OCI-LY7 (cell line): ENCODE measurements at regions of chr6 and their contacts with region 1.

Region 1: DNA sequence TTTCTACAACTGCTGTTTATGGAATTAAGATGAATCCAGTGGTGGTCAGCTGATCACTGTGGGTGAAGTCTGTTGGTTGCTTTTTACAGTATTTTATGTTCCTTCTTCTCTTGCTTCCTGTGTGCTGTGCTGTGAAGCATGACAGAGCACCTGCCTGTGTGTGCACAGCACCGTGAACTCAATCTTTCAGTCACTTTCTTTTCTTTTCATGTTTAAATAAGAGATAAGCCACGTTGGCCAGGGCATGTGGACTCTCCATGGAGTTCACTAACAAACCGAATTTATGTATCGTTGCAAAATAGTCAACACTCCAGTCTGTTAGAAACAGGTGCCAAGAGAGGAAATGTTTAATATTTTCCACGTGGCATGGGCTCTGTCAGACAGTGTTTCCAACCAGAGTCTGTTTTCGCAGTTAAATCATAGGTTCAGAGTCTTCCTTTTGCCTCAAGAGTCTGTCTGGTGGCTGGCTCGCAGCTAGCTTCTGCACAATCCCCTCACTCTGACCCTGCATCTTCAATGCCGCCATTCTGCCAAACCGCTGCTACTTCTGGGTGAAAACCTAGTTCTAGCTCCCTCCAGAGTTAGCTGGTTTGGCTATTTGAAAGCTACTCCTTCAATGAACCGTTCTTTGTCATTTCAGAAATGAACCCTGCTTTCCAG is 73.2 kb downstream of the QRSL1 start:
- DNase-seq: peak; percentile 99
- H3K4me3 ChIP-seq: peak overlapping the region; percentile 61
- H3K27ac ChIP-seq: peak overlapping the region; percentile 99
- H3K4me1 ChIP-seq: peaks cover 65% of the 10 kb centered on the region
- CTCF ChIP-seq: no peak

Region 2: DNA sequence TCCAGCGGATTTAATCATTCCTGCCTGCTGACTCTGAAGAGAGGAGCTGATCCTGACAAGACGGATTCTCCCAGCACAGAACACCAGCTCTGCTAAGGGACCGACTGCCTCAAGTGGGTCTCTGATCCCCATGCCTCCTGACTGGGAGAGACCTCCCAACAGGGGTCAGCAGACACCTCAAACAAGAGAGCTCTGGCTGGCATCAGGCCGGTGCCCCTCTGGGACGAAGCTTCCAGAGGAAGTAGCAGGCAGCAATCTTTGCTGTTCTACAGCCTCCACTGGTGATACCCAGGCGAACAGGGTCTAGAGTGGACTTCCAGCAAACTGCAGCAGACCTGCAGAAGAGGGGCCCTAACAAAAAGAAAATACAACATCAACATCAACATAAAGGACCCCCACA is 439.2 kb before region 1 on chr6:
- CTCF ChIA-PET with region 1: no interaction called
- POLR2A ChIA-PET with region 1: no interaction called
- intact Hi-C with region 1: no loop called
- DNase-seq: no peak
- H3K4me3 ChIP-seq: no peak overlapping the region
- H3K27ac ChIP-seq: no peak overlapping the region
- H3K4me1 ChIP-seq: no peaks in the 10 kb centered on the region
- CTCF ChIP-seq: no peak

Region 3: GRCh38 chr6:106629103-106629858 is 73.3 kb before region 1 on chr6 and contains the starts of genes QRSL1 and RTN4IP1:
- CTCF ChIA-PET with region 1: interaction called, 3 read pairs
- POLR2A ChIA-PET with region 1: interaction called, 12 read pairs
- intact Hi-C with region 1: loop called (anchors 1 kb)
- DNase-seq: peak; percentile 95
- H3K4me3 ChIP-seq: peak within 1 kb of the TSS; percentile 83
- H3K27ac ChIP-seq: peak within 1 kb of the TSS; percentile 98
- H3K4me1 ChIP-seq: peaks cover 54% of the 10 kb centered on the region
- CTCF ChIP-seq: no peak
- total RNA-seq, gene QRSL1: 63.9 and 65.7 TPM in 2 replicates
- total RNA-seq, gene RTN4IP1: 25.2 TPM in 2 replicates

Region 4: GRCh38 chr6:106648651-106649308 is 53.8 kb before region 1 on chr6:
- CTCF ChIA-PET with region 1: no interaction called
- POLR2A ChIA-PET with region 1: interaction called, 21 read pairs
- intact Hi-C with region 1: loop called (anchors 1 kb)
- DNase-seq: peak; percentile 91
- H3K4me3 ChIP-seq: peak overlapping the region; percentile 73
- H3K27ac ChIP-seq: peak overlapping the region; percentile 96
- H3K4me1 ChIP-seq: peaks cover 49% of the 10 kb centered on the region
- CTCF ChIP-seq: no peak

Region 5: DNA sequence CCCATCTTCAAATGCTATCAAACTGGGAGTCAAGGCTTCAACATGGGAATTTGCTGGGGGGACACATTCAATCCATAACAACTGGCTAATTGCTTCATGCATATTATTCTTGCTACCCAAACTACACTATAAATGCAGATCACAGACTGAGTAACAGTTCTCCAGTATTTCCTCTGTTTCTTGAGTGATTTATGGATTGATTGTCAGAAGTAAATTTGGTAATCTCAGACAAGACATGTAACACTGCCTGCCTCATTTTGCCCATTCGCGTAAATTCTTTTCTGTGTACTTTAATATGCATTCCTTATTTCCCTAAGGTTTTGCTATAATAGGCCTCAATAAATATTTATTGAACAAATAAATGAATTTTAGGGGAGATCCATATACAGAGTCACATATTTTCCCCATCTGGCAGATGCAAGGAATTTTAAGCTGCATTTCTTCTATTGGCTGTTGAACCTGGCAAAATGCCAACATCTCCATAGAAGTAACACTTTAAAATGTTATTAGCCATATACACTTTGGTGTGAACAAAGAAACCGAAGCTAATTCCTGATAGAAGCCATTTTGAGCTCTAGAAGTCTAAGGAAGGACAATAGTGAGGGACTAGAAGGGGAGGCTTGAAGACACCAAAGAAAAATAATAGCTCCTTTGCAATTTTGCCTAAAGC is 25.0 kb after region 1 on chr6:
- CTCF ChIA-PET with region 1: interaction called, 3 read pairs
- POLR2A ChIA-PET with region 1: interaction called, 13 read pairs
- intact Hi-C with region 1: no loop called
- DNase-seq: no peak
- H3K4me3 ChIP-seq: no peak overlapping the region
- H3K27ac ChIP-seq: no peak overlapping the region
- H3K4me1 ChIP-seq: peaks cover 37% of the 10 kb centered on the region
- CTCF ChIP-seq: no peak